Tibial artery (tissue), 4 donors: ENCODE measurements at regions of chr7 and their contacts with region 1.

Region 1: DNA sequence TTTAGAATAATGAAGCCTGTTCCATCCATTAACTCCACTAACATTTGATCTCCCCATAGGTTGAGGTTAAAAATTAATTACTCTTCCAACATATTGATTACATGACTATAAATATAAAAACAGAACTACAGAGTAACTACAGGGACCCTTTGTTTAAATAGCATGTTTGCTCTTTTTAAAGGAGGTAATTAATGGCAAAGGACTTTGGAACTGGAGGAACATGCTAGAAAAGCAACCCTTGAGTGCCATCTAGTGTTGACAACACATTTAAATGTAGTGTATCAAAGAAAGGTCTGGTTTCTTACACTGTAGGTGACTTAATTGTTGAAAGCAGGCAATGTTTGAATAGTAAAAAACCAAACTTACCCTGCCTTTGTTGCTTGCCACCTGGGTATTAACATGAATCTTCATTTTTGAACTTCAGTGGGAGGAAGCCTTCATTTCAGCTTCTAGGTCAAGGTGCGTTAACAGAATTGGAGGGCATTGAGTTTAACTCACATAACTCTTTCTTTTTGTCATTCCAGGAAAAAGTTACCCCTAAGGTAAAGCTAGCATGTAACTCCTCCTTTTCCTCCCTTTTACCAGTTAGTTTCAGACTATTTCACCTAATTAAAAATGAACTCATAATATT is 52.6 kb upstream of the CAPZA2 start:
- DNase-seq: no peak
- H3K4me3 ChIP-seq: no peak overlapping the region
- H3K27ac ChIP-seq: no peak overlapping the region
- H3K4me1 ChIP-seq: peaks cover 0 to 30% (median 12%) of the 10 kb centered on the region in 4 donors
- H3K27me3 ChIP-seq: no peaks in the 10 kb centered on the region
- CTCF ChIP-seq: peak; percentile 70 to 82

Region 2: DNA sequence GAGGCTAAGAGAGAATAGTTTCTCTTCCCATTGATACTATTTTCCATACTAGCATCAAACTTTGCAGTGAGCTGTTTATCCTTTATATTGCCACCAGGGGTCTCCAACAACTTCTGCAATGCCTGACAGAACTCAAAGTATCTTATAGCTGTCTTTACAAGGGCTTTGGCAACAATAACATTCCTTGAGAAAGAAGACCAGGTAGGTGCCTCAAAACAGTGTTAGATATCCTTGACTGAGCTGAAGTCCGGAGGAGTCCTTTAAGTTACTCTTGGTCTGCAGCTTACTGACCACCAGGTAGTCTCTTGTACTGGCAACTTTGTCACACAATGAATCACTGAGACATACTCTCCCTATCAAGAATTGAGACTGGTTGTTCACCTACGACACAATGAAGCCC is 629.4 kb before region 1 on chr7:
- intact Hi-C with region 1: loop called (anchors 5 kb)
- DNase-seq: no peak
- H3K4me3 ChIP-seq: no peak overlapping the region
- H3K27ac ChIP-seq: no peak overlapping the region
- H3K4me1 ChIP-seq: peaks cover 0 to 21% (median 0%) of the 10 kb centered on the region in 4 donors
- H3K27me3 ChIP-seq: no peaks in the 10 kb centered on the region
- CTCF ChIP-seq: peak; percentile 74 to 85

Region 3: GRCh38 chr7:116249708-116250553 is 559.8 kb before region 1 on chr7:
- intact Hi-C with region 1: loop called (anchors 5 kb)
- DNase-seq: no peak
- H3K4me3 ChIP-seq: no peak overlapping the region
- H3K27ac ChIP-seq: no peak overlapping the region
- H3K4me1 ChIP-seq: peaks cover 0 to 13% (median 4%) of the 10 kb centered on the region in 4 donors
- H3K27me3 ChIP-seq: no peaks in the 10 kb centered on the region
- CTCF ChIP-seq: peak in 1 of 2 experiments; percentile 18

Region 4: GRCh38 chr7:116576350-116577319 is 233.1 kb before region 1 on chr7:
- intact Hi-C with region 1: no loop called
- DNase-seq: peak; percentile 60 to 70
- H3K4me3 ChIP-seq: no peak overlapping the region
- H3K27ac ChIP-seq: peak overlapping the region; percentile 67 to 72
- H3K4me1 ChIP-seq: peaks cover 3 to 46% (median 16%) of the 10 kb centered on the region in 4 donors
- H3K27me3 ChIP-seq: no peaks in the 10 kb centered on the region
- CTCF ChIP-seq: no peak

Region 5: GRCh38 chr7:116591202-116592040 is 218.3 kb before region 1 on chr7:
- intact Hi-C with region 1: loop called (anchors 5 kb)
- DNase-seq: no peak
- H3K4me3 ChIP-seq: peak overlapping the region in 1 of 2 donors; percentile 2
- H3K27ac ChIP-seq: no peak overlapping the region
- H3K4me1 ChIP-seq: peaks cover 0 to 22% (median 7%) of the 10 kb centered on the region in 4 donors
- H3K27me3 ChIP-seq: no peaks in the 10 kb centered on the region
- CTCF ChIP-seq: peak; percentile 65 to 67

Region 6: DNA sequence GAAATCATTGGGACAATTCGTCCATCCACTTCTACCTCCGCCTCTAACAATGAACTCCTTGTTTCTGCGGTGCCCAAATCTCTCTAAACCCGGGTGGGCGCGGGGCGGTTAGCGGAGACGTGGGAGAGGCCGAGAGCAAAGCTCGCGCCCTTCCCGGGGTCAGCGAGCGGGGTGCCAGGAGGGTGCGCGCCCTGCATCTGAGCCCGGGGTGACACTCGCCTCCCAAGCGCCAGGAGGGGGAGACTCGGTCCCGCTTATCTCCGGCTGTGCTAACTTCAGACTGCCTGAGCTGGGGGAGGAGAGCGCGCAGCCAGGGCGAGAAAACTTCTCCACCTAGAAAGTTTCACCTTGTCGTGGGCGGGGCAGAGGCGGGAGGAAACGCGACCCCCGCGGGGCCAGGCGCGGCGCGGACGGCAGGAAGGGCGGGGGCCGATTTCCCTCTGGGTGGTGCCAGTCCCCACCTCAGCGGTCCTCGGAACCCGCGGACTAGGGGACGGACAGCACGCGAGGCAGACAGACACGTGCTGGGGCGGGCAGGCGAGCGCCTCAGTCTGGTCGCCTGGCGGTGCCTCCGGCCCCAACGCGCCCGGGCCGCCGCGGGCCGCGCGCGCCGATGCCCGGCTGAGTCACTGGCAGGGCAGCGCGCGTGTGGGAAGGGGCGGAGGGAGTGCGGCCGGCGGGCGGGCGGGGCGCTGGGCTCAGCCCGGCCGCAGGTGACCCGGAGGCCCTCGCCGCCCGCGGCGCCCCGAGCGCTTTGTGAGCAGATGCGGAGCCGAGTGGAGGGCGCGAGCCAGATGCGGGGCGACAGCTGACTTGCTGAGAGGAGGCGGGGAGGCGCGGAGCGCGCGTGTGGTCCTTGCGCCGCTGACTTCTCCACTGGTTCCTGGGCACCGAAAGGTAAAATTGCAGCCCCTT is 137.8 kb before region 1 on chr7 and contains the start of gene MET:
- intact Hi-C with region 1: loop called (anchors 2 kb)
- DNase-seq: peak; percentile 70 to 81
- H3K4me3 ChIP-seq: peak within 1 kb of the TSS; percentile 62 to 73
- H3K27ac ChIP-seq: peak within 1 kb of the TSS; percentile 74 to 76
- H3K4me1 ChIP-seq: peaks cover 0 to 17% (median 4%) of the 10 kb centered on the region in 4 donors
- H3K27me3 ChIP-seq: no peaks in the 10 kb centered on the region
- CTCF ChIP-seq: peak; percentile 50 to 61